IMR-90 (cell line): ENCODE measurements at regions of chr1 and their contacts with region 1.

Region 1: GRCh38 chr1:111222308-111223125 is 5.0 kb upstream of the CHI3L2 start:
- DNase-seq: peak; percentile 50
- ATAC-seq: peak; percentile 90
- H3K4me3 ChIP-seq: no peak overlapping the region
- H3K27ac ChIP-seq: no peak overlapping the region
- H3K4me1 ChIP-seq: peaks cover 8% of the 10 kb centered on the region
- H3K27me3 ChIP-seq: no peaks in the 10 kb centered on the region
- CTCF ChIP-seq: peak; percentile 89
- POLR2A ChIP-seq: no peak
- RAD21 ChIP-seq: peak; percentile 92

Region 2: DNA sequence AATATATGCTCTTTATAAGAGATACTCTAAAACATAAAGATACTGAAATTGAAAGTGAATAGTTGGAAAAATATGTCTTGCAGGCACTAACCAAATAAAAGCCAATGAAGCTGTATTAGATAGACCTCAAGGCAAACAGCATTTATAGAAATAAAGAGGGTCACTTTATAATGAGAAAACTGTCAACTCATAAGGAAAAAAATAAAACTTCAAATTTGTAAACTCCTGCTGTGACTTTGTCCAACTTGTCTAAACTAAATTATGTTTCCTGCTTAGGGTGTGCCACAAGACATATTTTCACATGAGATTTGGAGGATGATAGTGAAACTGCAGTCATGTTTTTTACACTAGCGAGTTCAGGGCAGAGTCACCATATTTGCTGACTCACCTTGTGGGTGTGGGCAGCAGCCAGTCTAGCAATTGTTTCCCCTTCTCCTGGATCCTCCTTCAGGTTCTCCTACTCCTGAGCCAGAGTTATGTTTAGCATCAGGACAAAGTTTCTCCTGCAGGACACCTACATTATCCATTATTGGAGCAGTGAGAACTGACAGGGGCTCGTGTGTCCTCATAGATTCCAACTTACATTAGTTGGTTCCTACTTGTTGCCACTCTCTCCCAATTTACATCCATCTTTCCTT is 305.7 kb before region 1 on chr1:
- CTCF ChIA-PET with region 1: no interaction called
- POLR2A ChIA-PET with region 1: no interaction called
- dilution Hi-C with region 1: no loop called
- in situ Hi-C with region 1: no loop called
- intact Hi-C with region 1: no loop called
- DNase-seq: peak; percentile 19
- ATAC-seq: peak; percentile 32; the same call in 1 of the 2 replicates
- H3K4me3 ChIP-seq: peak overlapping the region; percentile 15; the same call in 1 of the 2 replicates
- H3K27ac ChIP-seq: no peak overlapping the region
- H3K4me1 ChIP-seq: no peaks in the 10 kb centered on the region
- H3K27me3 ChIP-seq: no peaks in the 10 kb centered on the region
- CTCF ChIP-seq: no peak
- POLR2A ChIP-seq: no peak
- RAD21 ChIP-seq: no peak

Region 3: DNA sequence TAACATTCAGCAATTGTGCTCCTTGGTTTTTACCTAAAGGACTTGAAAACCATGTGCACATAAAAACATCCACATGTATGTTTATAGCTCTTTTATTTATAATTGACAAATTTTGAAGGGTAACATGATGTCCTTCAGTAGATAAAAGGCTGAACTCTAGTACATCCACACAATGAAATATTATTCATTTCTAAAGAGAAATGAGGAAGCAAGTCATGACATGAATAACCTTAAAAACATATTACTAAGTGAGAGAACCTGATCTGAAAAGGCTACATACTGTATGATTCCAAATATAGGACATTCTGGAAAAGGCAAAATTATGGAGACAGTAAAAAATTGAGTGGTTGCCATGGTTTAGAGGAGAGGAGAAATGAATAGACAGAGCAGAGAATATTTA is 132.9 kb before region 1 on chr1:
- CTCF ChIA-PET with region 1: no interaction called
- POLR2A ChIA-PET with region 1: no interaction called
- dilution Hi-C with region 1: no loop called
- in situ Hi-C with region 1: no loop called
- intact Hi-C with region 1: no loop called
- DNase-seq: no peak
- ATAC-seq: no peak
- H3K4me3 ChIP-seq: no peak overlapping the region
- H3K27ac ChIP-seq: no peak overlapping the region
- H3K4me1 ChIP-seq: no peaks in the 10 kb centered on the region
- H3K27me3 ChIP-seq: no peaks in the 10 kb centered on the region
- CTCF ChIP-seq: no peak
- POLR2A ChIP-seq: no peak
- RAD21 ChIP-seq: no peak

Region 4: DNA sequence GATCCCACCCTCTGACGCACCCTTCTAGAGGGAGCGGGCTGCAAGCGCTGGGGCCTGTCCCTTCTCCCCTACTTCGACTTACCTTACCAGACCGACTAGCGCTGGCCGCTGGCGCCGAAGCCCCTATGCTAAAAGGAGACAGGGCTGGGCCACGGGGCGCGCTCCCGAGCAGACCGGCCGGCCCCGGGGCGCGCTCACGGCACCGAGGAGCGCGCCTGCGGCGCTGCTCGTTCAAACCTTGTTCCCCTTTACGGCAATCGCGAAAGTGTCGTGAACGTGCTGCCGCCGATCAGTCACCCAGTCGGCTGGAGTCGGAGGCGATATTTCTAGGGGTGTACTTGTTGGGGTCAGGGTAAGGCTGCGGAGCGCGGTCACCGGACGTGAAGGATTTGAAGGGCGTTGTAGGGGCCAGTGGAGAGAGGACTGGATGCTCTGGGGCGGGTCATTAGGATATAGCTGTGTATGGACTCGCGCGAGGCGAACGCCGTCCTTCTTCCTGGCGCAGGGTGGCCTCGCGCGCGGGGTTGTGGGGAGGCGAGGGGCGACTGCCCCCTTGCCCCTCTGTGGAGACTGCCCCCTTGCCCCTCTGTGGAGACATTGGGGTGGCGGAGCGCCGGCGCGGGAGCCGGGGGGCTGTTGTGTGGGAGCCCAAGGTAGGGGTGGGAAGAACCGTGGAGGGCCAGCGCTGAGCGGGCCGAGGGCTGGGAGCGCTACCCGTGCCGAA is 82.4 kb before region 1 on chr1 and contains the starts of genes CEPT1 and DRAM2:
- CTCF ChIA-PET with region 1: no interaction called
- POLR2A ChIA-PET with region 1: no interaction called
- dilution Hi-C with region 1: no loop called
- in situ Hi-C with region 1: no loop called
- intact Hi-C with region 1: loop called (anchors 2 kb)
- DNase-seq: peak; percentile 96
- ATAC-seq: peak; percentile 87
- H3K4me3 ChIP-seq: peak within 1 kb of the TSS; percentile 77
- H3K27ac ChIP-seq: peak within 1 kb of the TSS; percentile 88
- H3K4me1 ChIP-seq: peaks cover 2% of the 10 kb centered on the region
- H3K27me3 ChIP-seq: no peaks in the 10 kb centered on the region
- CTCF ChIP-seq: no peak
- POLR2A ChIP-seq: no peak
- RAD21 ChIP-seq: no peak
- total RNA-seq, gene CEPT1: 27.4 and 42.8 TPM in 2 replicates
- total RNA-seq, gene DRAM2: 66.3 and 71.9 TPM in 2 replicates

Region 5: GRCh38 chr1:111392460-111392945 is 170.0 kb after region 1 on chr1:
- CTCF ChIA-PET with region 1: no interaction called
- POLR2A ChIA-PET with region 1: no interaction called
- dilution Hi-C with region 1: no loop called
- in situ Hi-C with region 1: loop called (anchors 5 kb)
- intact Hi-C with region 1: no loop called
- DNase-seq: no peak
- ATAC-seq: no peak
- H3K4me3 ChIP-seq: no peak overlapping the region
- H3K27ac ChIP-seq: no peak overlapping the region
- H3K4me1 ChIP-seq: no peaks in the 10 kb centered on the region
- H3K27me3 ChIP-seq: peaks cover 29% of the 10 kb centered on the region
- CTCF ChIP-seq: no peak
- POLR2A ChIP-seq: no peak
- RAD21 ChIP-seq: no peak

Region 6: DNA sequence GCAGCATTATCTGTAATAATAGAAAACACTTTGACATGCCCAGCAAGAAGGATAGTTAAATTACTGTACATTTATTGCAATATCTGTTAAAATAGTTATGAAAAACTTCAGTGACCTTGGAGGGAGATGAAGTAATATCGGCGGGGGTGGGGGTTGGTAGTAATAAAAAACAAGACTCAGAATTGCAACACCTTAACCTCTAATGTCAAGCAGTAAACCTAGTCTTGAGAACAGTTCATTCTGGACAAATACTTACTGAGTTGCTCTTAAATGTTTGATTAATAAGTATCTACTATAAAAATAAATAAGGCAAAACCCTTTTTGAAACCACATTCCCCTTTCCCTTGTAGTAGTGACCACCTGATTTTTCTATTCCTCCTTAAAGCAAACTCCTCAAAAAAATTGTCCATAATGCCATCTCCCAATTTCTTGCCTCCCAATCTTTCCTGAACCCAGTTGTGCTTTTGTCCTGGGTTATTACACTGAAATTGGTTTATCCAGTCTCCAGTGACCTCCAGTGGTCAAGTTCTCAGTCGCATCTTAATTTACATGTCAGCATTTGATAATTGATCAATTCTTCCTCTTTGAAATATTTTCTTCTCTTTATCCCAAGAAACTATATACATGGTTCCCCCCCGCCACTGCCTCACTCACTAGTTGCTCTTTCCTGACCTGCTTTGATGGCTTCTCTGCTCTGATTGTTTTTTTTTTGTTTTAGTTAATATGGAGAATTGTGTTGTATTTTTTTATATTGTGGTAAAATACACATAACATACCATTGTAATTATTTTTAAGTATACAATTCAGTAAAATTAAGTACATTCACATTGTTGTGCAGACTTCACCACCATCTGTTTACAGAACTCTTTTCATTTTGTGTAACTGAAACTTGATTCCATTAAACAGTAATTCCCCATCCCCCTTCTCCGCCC is 433.8 kb after region 1 on chr1:
- CTCF ChIA-PET with region 1: no interaction called
- POLR2A ChIA-PET with region 1: no interaction called
- dilution Hi-C with region 1: no loop called
- in situ Hi-C with region 1: loop called (anchors 10 kb)
- intact Hi-C with region 1: no loop called
- DNase-seq: peak; percentile 66
- ATAC-seq: peak; percentile 72
- H3K4me3 ChIP-seq: no peak overlapping the region
- H3K27ac ChIP-seq: no peak overlapping the region
- H3K4me1 ChIP-seq: peaks cover 8% of the 10 kb centered on the region
- H3K27me3 ChIP-seq: no peaks in the 10 kb centered on the region
- CTCF ChIP-seq: peak; percentile 72
- POLR2A ChIP-seq: 0 out of 2 replicates have a peak, but pooled peaks have one; percentile 19
- RAD21 ChIP-seq: peak; percentile 86

Region 7: GRCh38 chr1:111690306-111690617 is 467.7 kb after region 1 on chr1:
- CTCF ChIA-PET with region 1: no interaction called
- POLR2A ChIA-PET with region 1: no interaction called
- dilution Hi-C with region 1: no loop called
- in situ Hi-C with region 1: no loop called
- intact Hi-C with region 1: no loop called
- DNase-seq: peak; percentile 91
- ATAC-seq: peak; percentile 87
- H3K4me3 ChIP-seq: no peak overlapping the region
- H3K27ac ChIP-seq: no peak overlapping the region
- H3K4me1 ChIP-seq: no peaks in the 10 kb centered on the region
- H3K27me3 ChIP-seq: no peaks in the 10 kb centered on the region
- CTCF ChIP-seq: no peak
- POLR2A ChIP-seq: no peak
- RAD21 ChIP-seq: no peak